ENCODE measurements at regions of chr14 and their contacts with region 1.

Region 1: DNA sequence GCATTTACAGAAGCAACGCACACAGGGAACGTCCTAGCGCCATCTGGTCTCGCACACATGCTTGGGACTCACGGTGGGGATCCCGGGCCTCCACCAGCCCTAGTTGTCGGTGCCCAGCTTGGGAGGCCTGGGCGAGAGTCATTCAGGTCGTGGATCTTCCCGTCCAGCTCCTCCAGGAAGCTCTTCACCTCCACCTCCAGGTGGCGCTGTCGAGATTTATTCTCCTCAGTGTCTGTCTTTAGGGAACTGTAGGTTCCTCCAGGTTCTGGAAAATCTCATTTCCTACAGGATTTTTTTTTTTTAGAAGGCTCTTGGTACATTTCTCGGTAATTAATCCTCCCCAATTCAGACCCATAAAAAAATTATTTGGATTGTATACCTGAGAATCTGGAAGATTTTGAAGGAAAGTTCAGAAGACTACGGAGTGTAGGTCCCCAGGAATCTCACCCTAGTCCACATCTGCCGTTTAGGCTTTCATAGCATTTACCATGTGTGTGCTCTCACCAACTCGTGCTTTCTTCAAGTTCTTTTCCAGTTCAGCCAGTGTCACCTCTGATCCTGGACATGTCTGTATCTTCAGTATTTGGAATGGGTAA is 910.0 kb downstream of the TMEM121 start:
- DNase-seq: peak; percentile 84
- ATAC-seq: no peak
- H3K4me3 Mint-ChIP-seq: no peak overlapping the region
- H3K27ac Mint-ChIP-seq: no peak overlapping the region
- H3K4me1 Mint-ChIP-seq: no peaks in the 10 kb centered on the region
- H3K27me3 Mint-ChIP-seq: peaks cover 10% of the 10 kb centered on the region

Region 2: GRCh38 chr14:106491851-106492250 is 55.4 kb after region 1 on chr14:
- CTCF ChIA-PET with region 1: interaction called, 15 read pairs
- POLR2A ChIA-PET with region 1: no interaction called
- intact Hi-C with region 1: no loop called
- DNase-seq: peak; percentile 63
- ATAC-seq: no peak
- H3K4me3 Mint-ChIP-seq: no peak overlapping the region
- H3K27ac Mint-ChIP-seq: no peak overlapping the region
- H3K4me1 Mint-ChIP-seq: peaks cover 32% of the 10 kb centered on the region
- H3K27me3 Mint-ChIP-seq: no peaks in the 10 kb centered on the region

Region 3: DNA sequence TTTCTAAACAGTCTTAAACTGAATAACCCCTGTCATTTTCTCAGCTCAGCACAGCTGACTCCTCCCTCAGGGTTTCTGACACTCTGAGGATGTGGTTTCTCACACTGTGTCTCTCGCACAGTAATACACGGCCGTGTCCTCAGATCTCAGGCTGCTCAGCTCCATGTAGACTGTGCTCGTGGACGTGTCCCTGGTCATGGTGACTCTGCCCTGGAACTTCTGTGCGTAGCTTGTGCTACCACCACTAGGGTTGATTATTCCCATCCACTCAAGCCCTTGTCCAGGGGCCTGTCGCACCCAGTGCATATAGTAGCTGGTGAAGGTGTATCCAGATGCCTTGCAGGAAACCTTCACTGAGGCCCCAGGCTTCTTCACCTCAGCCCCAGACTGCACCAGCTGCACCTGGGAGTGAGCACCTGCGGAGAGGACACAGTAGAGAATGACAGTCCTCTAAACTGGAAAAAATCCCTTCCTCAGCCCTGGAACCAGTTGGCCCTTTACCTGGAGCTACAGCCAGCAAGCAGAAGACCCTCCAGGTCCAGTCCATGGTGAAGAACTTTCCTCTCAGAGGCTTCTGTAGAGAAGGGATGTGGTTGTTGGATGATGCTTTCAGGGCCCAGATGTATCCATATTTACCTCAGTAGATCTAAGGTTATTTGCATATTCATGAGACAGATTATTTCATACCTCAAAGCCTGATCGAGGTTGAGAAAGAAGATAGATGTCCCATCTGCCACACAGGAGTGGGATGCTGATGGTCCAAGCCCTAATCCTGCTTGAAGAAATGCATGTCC is 74.8 kb after region 1 on chr14:
- CTCF ChIA-PET with region 1: interaction called, 18 read pairs
- POLR2A ChIA-PET with region 1: no interaction called
- intact Hi-C with region 1: no loop called
- DNase-seq: peak; percentile 69
- ATAC-seq: peak; percentile 53
- H3K4me3 Mint-ChIP-seq: peak overlapping the region; percentile 15
- H3K27ac Mint-ChIP-seq: peak overlapping the region; percentile 51
- H3K4me1 Mint-ChIP-seq: peaks cover 73% of the 10 kb centered on the region
- H3K27me3 Mint-ChIP-seq: no peaks in the 10 kb centered on the region

Region 4: DNA sequence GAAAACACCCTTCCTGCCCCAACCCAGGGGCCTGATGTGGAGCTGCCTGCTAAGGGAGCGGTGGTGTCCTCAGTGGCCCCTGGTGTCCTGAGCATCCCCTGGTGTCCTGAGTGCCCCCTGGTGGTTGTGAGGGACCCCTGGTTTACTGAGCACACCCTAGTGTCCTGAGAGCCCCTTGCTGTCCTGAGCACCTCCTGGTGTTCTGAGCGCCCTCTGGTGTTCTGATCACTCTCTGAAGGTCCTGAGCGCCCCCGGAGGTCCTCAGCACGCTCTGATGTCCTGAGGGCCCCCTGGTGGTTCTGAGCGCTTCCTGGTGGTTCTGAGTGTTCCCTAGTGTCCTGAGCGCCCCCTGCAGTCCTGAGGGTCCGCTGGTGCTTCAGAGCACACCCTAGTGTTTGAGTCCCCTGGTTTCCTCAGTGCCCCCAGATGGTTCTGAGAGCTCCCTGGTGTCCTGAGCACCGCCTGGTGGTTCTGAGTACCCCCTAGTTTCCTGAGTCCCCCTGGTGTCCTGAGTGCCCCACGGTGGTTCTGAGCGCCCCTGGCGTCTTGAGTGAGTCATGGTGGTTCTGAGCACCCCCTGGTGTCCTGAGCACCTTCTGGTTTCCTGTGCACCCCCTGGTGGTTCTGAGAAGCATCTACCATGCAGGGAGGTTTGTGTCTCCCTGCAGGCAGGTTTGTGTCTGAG is 94.2 kb after region 1 on chr14:
- CTCF ChIA-PET with region 1: interaction called, 46 read pairs
- POLR2A ChIA-PET with region 1: no interaction called
- intact Hi-C with region 1: no loop called
- DNase-seq: peak; percentile 64
- ATAC-seq: peak; percentile 87
- H3K4me3 Mint-ChIP-seq: no peak overlapping the region
- H3K27ac Mint-ChIP-seq: no peak overlapping the region
- H3K4me1 Mint-ChIP-seq: no peaks in the 10 kb centered on the region
- H3K27me3 Mint-ChIP-seq: peaks cover 10% of the 10 kb centered on the region

Region 5: GRCh38 chr14:106564058-106564656 is 127.7 kb after region 1 on chr14:
- CTCF ChIA-PET with region 1: interaction called, 10 read pairs
- POLR2A ChIA-PET with region 1: no interaction called
- intact Hi-C with region 1: no loop called
- DNase-seq: peak; percentile 86
- ATAC-seq: peak; percentile 76
- H3K4me3 Mint-ChIP-seq: no peak overlapping the region
- H3K27ac Mint-ChIP-seq: no peak overlapping the region
- H3K4me1 Mint-ChIP-seq: no peaks in the 10 kb centered on the region
- H3K27me3 Mint-ChIP-seq: peaks cover 10% of the 10 kb centered on the region

Measured in activated CD4-positive, alpha-beta T cell treated with anti-CD3 and anti-CD28 coated beads for 36 hours (primary cell).